ENCODE measurements at regions of chr17 and their contacts with region 1.

Region 1: DNA sequence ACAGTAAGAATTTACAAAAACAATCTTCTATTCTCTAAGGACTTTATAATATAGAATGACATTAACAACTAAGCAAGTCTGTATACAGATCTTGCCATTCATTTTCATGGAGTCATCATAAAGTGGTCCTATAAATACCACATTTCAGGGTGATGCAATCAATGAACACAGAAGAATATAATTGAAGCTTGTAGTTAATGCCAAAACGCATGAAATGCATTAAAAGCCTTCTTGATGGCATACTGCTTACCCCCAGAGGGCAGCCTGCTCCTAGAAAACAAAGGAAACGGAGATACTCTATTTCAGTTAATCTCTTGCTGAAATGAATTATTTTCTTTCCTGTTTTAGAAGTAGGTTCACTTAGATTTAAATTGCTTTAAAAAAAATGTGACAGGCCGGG is 45.2 kb upstream of the STAC2 start:
- DNase-seq: peak; percentile 53
- H3K4me3 ChIP-seq: no peak overlapping the region
- H3K27me3 ChIP-seq: no peaks in the 10 kb centered on the region
- CTCF ChIP-seq: peak; percentile 71

Region 2: GRCh38 chr17:39144416-39144840 is 126.5 kb before region 1 on chr17:
- CTCF ChIA-PET with region 1: no interaction called
- POLR2A ChIA-PET with region 1: no interaction called
- DNase-seq: peak; percentile 64
- H3K4me3 ChIP-seq: no peak overlapping the region
- H3K27me3 ChIP-seq: 0 out of 2 replicates have a peak, but pooled peaks cover 1% of the 10 kb centered on the region
- CTCF ChIP-seq: no peak

Region 3: DNA sequence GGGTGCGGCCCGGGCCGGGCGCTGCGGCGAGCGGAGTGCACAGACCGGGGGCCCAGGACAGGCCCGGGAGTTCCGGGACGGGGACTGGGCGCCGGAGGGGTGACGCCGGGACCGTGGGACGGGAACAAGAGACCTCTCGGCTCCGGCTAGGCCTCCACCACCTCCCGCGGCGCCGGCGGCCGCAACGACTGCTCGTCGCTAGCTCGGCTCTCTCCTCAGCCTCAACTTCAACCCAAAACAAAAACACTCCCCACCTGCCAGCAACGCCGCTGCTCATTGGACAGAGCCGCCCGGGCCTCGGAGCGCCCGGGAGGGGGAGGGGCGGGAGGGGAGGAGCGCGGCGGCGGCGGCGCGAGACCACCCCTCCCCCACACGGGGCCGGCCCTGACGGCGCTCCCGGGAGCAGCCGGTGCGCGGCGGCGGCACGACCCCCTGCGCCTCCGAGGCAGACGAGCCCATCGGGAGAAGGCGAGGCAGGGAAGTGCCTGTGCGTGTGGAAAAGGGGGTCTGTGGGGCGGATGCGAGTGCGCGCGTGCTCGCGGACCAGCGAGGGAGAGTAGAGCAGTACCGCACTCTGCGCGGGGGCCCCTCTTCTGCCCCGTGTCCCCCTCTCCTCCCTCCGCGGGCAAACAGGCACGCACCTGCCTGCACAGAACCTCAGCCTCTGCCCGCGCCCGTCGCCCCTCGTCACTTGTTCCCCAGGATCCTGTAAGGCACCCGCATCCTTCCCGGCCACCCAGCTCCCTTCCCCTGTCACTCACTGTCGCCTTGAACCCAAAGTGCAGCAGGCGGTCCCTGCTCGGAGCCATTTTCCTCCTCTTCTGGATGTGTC is 130.7 kb after region 1 on chr17 and contains the start of gene FBXL20:
- CTCF ChIA-PET with region 1: interaction called, 10 read pairs
- POLR2A ChIA-PET with region 1: no interaction called
- DNase-seq: peak; percentile 25
- H3K4me3 ChIP-seq: peak within 1 kb of the TSS; percentile 97
- H3K27me3 ChIP-seq: no peaks in the 10 kb centered on the region
- CTCF ChIP-seq: no peak
- polyA plus RNA-seq, gene FBXL20: 3.9 and 5.1 TPM in 2 replicates